WTC11 (cell line): ENCODE measurements at regions of chr3 and their contacts with region 1.

Region 1: GRCh38 chr3:72655131-72655551 is 193.1 kb downstream of the SHQ1 start:
- DNase-seq: peak; percentile 77
- ATAC-seq: peak; percentile 89
- H3K4me3 Mint-ChIP-seq: peak overlapping the region; percentile 45
- H3K27ac Mint-ChIP-seq: no peak overlapping the region
- H3K4me1 Mint-ChIP-seq: peaks cover 14% of the 10 kb centered on the region
- H3K27me3 Mint-ChIP-seq: no peaks in the 10 kb centered on the region
- CTCF ChIP-seq: no peak

Region 2: DNA sequence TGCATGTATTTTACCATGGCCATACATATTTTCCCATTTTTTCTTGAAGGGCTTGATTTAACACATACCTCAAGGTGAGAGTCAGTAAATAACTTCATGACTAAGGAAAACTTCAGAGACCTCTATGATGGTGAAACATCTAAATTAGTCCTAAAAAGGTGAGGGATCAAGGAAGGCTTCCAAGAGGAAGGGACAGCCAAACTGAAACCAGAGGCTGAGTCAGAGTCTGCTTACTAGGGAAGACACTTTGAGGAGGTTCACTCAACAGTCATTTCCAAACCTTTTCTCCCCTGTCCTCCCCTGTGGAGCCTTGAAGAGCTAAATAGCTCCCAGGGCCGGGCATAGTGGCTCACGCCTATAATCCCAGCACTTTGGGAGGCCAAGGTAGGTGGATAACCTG is 13.5 kb before region 1 on chr3:
- CTCF ChIA-PET with region 1: interaction called, 14 read pairs
- POLR2A ChIA-PET with region 1: no interaction called
- DNase-seq: no peak
- ATAC-seq: no peak
- H3K4me3 Mint-ChIP-seq: no peak overlapping the region
- H3K27ac Mint-ChIP-seq: no peak overlapping the region
- H3K4me1 Mint-ChIP-seq: no peaks in the 10 kb centered on the region
- H3K27me3 Mint-ChIP-seq: no peaks in the 10 kb centered on the region; the same call in 1 of the 2 replicates
- CTCF ChIP-seq: no peak